Caco-2 (cell line): ENCODE measurements at regions of chrX and their contacts with region 1.

Region 1: DNA sequence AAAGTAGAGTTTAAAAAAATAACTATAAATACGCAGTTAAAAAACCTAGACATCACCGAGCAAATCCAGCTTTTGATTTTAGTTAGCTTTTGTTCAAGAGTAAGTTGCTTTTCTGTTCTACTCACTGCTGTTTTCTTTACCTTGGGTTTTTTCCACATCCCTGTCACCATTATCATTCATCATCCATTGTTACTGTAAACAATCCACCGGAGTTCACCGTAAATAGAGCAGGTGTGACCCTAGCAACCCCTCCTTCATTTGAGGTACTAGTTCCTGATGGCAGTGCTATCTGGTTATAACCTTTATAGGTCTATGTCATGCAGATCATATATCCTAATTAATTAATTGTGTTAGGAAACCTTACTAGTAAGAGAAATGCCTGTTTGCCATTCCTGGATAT is 43.0 kb upstream of the TEX13D start:
- DNase-seq: no peak
- H3K4me3 ChIP-seq: no peak overlapping the region
- H3K4me3 Mint-ChIP-seq: no peak overlapping the region
- H3K27ac Mint-ChIP-seq: no peak overlapping the region
- H3K4me1 ChIP-seq: no peaks in the 10 kb centered on the region
- H3K4me1 Mint-ChIP-seq: no peaks in the 10 kb centered on the region
- H3K27me3 ChIP-seq: no peaks in the 10 kb centered on the region
- H3K27me3 Mint-ChIP-seq: peaks cover 10% of the 10 kb centered on the region
- CTCF ChIP-seq: no peak

Region 2: GRCh38 chrX:124300405-124300804 is 11.0 kb after region 1 on chrX:
- CTCF ChIA-PET with region 1: no interaction called
- POLR2A ChIA-PET with region 1: no interaction called
- intact Hi-C with region 1: loop called (anchors 1 kb)
- DNase-seq: no peak
- H3K4me3 ChIP-seq: no peak overlapping the region
- H3K4me3 Mint-ChIP-seq: no peak overlapping the region
- H3K27ac Mint-ChIP-seq: no peak overlapping the region
- H3K4me1 ChIP-seq: no peaks in the 10 kb centered on the region
- H3K4me1 Mint-ChIP-seq: no peaks in the 10 kb centered on the region
- H3K27me3 ChIP-seq: no peaks in the 10 kb centered on the region
- H3K27me3 Mint-ChIP-seq: peaks cover 5% of the 10 kb centered on the region
- CTCF ChIP-seq: no peak

Region 3: GRCh38 chrX:124388562-124388961 is 99.1 kb after region 1 on chrX:
- CTCF ChIA-PET with region 1: no interaction called
- POLR2A ChIA-PET with region 1: no interaction called
- intact Hi-C with region 1: no loop called
- DNase-seq: peak; percentile 33 to 48
- H3K4me3 ChIP-seq: no peak overlapping the region
- H3K4me3 Mint-ChIP-seq: no peak overlapping the region
- H3K27ac Mint-ChIP-seq: no peak overlapping the region
- H3K4me1 ChIP-seq: no peaks in the 10 kb centered on the region
- H3K4me1 Mint-ChIP-seq: no peaks in the 10 kb centered on the region
- H3K27me3 ChIP-seq: no peaks in the 10 kb centered on the region
- H3K27me3 Mint-ChIP-seq: no peaks in the 10 kb centered on the region
- CTCF ChIP-seq: peak; percentile 47 to 57

Region 4: DNA sequence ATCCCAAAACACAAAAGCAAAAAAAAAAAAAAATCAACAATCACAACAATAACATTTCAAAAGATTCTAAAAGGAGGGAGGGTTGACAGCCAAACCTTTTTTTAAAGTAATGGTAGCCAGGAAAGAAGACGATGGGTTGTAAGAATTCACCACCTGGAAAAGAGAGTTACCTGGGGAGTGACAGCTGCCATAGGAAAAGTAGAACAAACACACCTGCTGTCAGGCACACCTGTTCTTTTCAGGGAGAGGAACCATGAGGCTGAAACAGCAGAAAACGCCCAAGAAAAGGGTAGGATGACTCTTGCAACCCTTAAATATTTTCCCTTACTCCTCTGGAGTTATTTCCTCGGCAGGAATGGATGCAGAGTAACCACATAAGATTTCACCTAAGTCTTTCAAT is 641.8 kb after region 1 on chrX:
- CTCF ChIA-PET with region 1: no interaction called
- POLR2A ChIA-PET with region 1: no interaction called
- intact Hi-C with region 1: no loop called
- DNase-seq: no peak
- H3K4me3 ChIP-seq: no peak overlapping the region
- H3K4me3 Mint-ChIP-seq: no peak overlapping the region
- H3K27ac Mint-ChIP-seq: no peak overlapping the region
- H3K4me1 ChIP-seq: no peaks in the 10 kb centered on the region
- H3K4me1 Mint-ChIP-seq: no peaks in the 10 kb centered on the region
- H3K27me3 ChIP-seq: no peaks in the 10 kb centered on the region
- H3K27me3 Mint-ChIP-seq: peaks cover 12% of the 10 kb centered on the region
- CTCF ChIP-seq: no peak